CD4-positive, alpha-beta T cell (primary cell): ENCODE measurements at regions of chr5 and their contacts with region 1.

Region 1: DNA sequence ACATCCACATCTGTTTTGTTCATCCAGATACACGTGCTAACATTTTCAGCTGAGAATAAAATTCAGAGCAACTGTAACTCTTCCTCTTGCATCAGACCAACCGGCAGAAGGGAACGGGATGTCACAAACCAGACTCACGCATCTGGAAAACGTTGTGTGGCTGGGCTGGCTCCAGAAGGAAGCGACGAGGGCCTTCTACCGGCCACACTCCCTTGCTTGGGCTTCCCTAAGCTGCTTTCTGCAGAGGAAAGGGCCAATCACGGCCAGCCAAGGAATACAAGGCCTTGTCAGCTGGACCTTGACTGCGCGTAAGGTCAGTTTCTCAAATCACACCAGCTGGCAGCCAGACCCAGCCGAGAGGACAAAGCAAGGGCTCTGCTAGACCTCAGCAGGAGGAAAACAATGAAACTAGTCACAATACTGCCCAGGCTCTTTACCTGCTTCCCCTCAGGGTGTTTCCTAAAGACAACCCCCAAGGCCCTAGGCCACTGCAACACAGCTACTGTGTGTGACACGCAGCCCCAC is 106.1 kb downstream of the THBS4 start:
- DNase-seq: peak in 2 of 14 experiments; percentile 40 to 42
- ATAC-seq: no peak
- H3K4me3 ChIP-seq: no peak overlapping the region
- H3K4me3 Mint-ChIP-seq: peak overlapping the region; percentile 84
- H3K27ac ChIP-seq: peak overlapping the region; percentile 42 to 51
- H3K27ac Mint-ChIP-seq: peak overlapping the region; percentile 95
- H3K4me1 ChIP-seq: peaks cover 60% of the 10 kb centered on the region
- H3K4me1 Mint-ChIP-seq: peaks cover 84% of the 10 kb centered on the region
- H3K27me3 ChIP-seq: no peaks in the 10 kb centered on the region
- H3K27me3 Mint-ChIP-seq: no peaks in the 10 kb centered on the region
- CTCF ChIP-seq: no peak

Region 2: DNA sequence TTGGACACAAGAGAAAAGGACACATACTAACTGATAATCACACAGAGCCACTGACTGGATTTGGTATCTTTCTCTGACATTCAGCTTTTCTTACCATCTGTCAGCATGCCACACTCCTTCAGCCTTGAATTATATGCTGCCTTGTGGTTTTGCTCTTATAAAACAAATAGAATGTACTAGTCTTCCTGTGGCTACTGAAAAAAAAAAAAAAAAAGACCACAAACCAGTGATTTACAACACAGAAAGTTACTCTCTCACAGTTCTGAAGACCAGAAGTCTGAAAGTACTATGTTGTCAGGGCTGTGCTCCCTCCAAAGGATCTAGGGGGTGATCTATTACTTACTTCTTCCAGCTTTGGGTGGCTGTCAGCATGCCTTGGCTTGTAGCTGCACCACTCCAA is 23.8 kb before region 1 on chr5:
- CTCF ChIA-PET with region 1: no interaction called
- POLR2A ChIA-PET with region 1: interaction called, 19 read pairs
- intact Hi-C with region 1: no loop called
- DNase-seq: no peak
- ATAC-seq: peak; percentile 26
- H3K4me3 ChIP-seq: no peak overlapping the region
- H3K4me3 Mint-ChIP-seq: no peak overlapping the region
- H3K27ac ChIP-seq: peak overlapping the region in 1 of 2 donors; percentile 18
- H3K27ac Mint-ChIP-seq: peak overlapping the region; percentile 64
- H3K4me1 ChIP-seq: peaks cover 31% of the 10 kb centered on the region
- H3K4me1 Mint-ChIP-seq: peaks cover 65% of the 10 kb centered on the region
- H3K27me3 ChIP-seq: no peaks in the 10 kb centered on the region
- H3K27me3 Mint-ChIP-seq: no peaks in the 10 kb centered on the region
- CTCF ChIP-seq: no peak

Region 3: DNA sequence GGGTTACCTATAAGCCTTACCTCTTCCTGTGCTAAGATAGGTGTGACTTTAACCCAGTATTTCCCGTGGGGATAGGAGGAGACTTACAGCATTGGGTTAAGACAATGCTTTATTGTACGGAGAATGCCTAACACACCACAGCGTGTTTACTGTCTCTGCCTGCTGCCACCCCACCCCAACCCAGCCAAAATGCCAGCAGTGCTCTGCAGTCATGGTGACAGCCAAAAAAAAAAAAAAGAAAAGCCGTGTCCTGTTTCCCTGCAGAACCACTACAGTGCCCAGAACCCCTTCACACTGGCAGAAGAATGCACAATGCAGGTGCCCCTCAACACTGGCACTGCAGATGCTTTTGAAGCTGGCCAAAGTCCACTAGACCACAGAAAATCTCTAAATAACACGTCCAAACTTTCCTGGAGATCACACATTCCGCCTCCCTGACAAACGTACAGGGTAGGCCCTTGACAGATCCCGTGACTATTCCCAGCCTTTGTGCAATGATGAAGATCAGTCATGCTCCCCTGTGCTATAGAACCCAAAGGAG is 12.4 kb after region 1 on chr5:
- CTCF ChIA-PET with region 1: interaction called, 5 read pairs
- POLR2A ChIA-PET with region 1: interaction called, 96 read pairs
- intact Hi-C with region 1: loop called (anchors 1 to 2 kb)
- DNase-seq: peak in 11 of 14 experiments; percentile 19 to 67 (median 48)
- ATAC-seq: peak; percentile 69
- H3K4me3 ChIP-seq: no peak overlapping the region
- H3K4me3 Mint-ChIP-seq: peak overlapping the region; percentile 73
- H3K27ac ChIP-seq: peak overlapping the region; percentile 48 to 56
- H3K27ac Mint-ChIP-seq: peak overlapping the region; percentile 98
- H3K4me1 ChIP-seq: peaks cover 51% of the 10 kb centered on the region
- H3K4me1 Mint-ChIP-seq: peaks cover 86% of the 10 kb centered on the region
- H3K27me3 ChIP-seq: no peaks in the 10 kb centered on the region
- H3K27me3 Mint-ChIP-seq: no peaks in the 10 kb centered on the region
- CTCF ChIP-seq: no peak

Region 4: GRCh38 chr5:80191991-80192398 is 50.8 kb after region 1 on chr5:
- CTCF ChIA-PET with region 1: interaction called, 3 read pairs
- POLR2A ChIA-PET with region 1: interaction called, 54 read pairs
- intact Hi-C with region 1: loop called (anchors 2 to 5 kb)
- DNase-seq: peak; percentile 28 to 72 (median 46)
- ATAC-seq: peak; percentile 60
- H3K4me3 ChIP-seq: peak overlapping the region; percentile 31
- H3K4me3 Mint-ChIP-seq: peak overlapping the region; percentile 61
- H3K27ac ChIP-seq: peak overlapping the region; percentile 74 to 86
- H3K27ac Mint-ChIP-seq: peak overlapping the region; percentile 94
- H3K4me1 ChIP-seq: peaks cover 93% of the 10 kb centered on the region
- H3K4me1 Mint-ChIP-seq: peaks cover 89% of the 10 kb centered on the region
- H3K27me3 ChIP-seq: no peaks in the 10 kb centered on the region
- H3K27me3 Mint-ChIP-seq: no peaks in the 10 kb centered on the region
- CTCF ChIP-seq: no peak